Ascending aorta (tissue), 2 donors: ENCODE measurements at regions of chrX and their contacts with region 1.

Region 1: DNA sequence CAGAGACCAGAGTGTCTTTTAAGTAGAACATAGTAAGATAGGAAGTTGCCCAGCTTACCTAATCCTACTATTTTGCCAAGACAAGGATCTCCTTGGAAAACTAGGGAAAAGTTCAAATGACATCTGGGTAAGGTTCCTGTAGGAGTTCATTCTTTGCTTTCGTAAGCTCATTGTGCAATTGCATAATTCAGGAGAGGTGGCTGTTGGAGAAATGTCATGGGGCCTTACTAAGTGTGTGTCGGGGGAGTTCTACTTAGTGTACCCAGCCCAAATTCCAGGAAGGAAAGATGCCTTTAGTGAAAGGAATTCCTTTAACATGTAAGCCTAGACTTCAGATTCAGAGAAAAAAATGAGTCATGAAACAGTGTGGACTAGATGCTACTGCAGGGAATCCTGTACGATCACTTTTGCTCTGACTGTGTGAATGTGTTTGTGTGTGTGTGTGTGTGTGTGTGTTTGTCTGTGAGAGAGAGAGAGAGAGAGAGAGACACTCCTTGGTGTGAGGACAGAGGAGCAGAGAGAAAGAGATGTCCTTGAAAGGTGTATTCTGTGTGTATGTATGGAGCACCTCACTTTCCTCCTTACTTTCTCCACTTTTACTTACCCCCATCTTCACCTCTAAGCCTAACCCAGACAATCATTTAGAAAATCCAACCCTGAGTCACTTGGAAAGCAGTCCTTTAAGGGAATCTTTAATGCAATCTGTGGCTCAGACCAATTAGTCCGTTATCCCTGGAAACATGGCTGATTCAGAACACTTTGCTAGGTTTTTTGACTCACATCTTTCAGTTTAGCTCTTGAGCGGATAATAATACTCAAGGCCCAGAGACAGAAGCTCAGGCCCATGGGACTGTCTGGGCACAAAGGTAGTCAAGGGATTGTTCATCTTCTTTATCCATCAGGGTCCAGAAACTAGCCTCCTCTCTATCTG is 114.5 kb upstream of the ACSL4 start:
- DNase-seq: no peak
- H3K4me3 ChIP-seq: no peak overlapping the region
- H3K27ac ChIP-seq: peak overlapping the region; percentile 14 to 48
- H3K4me1 ChIP-seq: peaks cover 0 to 8% of the 10 kb centered on the region in 2 donors
- H3K27me3 ChIP-seq: no peaks in the 10 kb centered on the region
- CTCF ChIP-seq: no peak

Region 2: GRCh38 chrX:109536439-109537336 is 310.8 kb before region 1 on chrX and contains the start of gene NXT2:
- intact Hi-C with region 1: loop called (anchors 5 kb)
- DNase-seq: peak; percentile 67 to 93
- H3K4me3 ChIP-seq: peak within 1 kb of the TSS; percentile 55 to 66
- H3K27ac ChIP-seq: peak within 1 kb of the TSS; percentile 86 to 89
- H3K4me1 ChIP-seq: no peaks in the 10 kb centered on the region
- H3K27me3 ChIP-seq: no peaks in the 10 kb centered on the region
- CTCF ChIP-seq: no peak
- total RNA-seq, gene NXT2: 1.8 TPM

Region 3: DNA sequence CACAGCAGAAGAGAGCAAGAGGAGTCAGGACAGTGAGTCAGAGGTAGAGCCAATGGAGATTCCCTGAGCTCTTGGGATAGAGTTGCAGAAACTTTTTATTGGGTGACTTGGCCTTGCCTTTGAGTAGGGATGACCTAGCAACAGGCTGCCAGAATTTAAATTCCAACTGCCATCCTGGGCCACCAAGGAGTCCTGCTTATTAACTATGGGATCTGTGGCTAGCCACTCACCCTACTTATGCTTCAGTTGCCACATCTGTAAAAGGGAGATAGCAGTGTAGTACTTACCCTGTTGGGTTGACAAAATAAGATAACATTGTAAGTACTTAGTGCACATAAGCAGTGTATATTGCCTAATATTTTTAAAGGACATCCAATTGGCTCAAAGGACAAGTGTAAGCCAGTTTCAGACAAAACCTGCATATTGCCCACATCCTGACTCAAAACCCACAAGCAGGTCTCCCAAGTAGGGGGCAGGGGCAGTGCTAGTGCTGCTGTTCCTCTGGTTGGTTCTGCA is 111.9 kb after region 1 on chrX:
- intact Hi-C with region 1: no loop called
- DNase-seq: no peak
- H3K4me3 ChIP-seq: no peak overlapping the region
- H3K27ac ChIP-seq: no peak overlapping the region
- H3K4me1 ChIP-seq: no peaks in the 10 kb centered on the region
- H3K27me3 ChIP-seq: no peaks in the 10 kb centered on the region
- CTCF ChIP-seq: no peak